ENCODE measurements at regions of chr19 and their contacts with region 1.

Region 1: DNA sequence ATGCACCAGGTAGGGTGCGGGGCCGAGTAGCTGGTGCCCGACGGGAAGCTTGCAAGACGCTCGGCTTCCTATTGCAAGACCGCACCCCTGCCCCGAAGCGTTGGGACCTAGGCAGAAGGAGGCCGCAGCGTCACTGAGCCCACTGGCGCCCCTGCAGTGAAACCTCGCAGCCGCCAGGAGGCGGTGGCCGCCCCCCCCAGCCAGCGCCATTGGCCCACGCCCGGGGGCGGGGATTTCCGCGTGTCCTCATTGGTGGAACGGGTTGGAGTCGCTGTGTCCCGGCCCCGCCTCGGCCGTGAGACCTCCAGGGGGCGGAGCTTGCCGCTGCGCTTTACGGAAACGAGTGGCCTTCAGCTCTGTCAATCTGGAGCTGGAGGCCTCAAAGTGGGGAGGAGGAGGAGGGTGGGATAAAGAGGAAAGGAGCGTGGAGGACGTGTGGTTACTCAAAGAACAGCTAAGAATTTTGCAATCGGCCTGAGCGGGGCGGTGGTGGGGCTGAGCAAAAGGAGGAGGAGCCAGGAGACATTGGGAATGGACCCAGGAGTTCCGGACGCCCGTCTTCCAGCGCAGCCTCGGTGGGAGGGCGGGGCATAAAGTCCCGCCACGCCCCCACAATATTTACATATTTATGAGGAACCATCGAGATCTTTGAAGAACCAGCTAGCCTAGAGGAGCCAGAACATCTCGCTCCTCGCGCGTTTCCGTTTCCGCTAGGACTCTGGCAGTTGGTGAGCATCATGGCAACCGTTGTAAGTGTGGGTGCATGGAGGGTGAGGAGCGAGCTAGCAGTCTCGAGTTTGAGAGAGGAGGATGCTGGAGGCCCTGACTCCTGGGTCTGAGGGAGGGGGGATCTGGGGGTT is at the starts of genes GYS1 and RUVBL2:
- DNase-seq: peak; percentile 96 to 100 (median 99)
- ATAC-seq: peak; percentile 95
- H3K4me3 ChIP-seq: peak within 1 kb of the TSS; percentile 70
- H3K4me3 Mint-ChIP-seq: peak within 1 kb of the TSS; percentile 95 to 100 (median 96)
- H3K27ac ChIP-seq: peak within 1 kb of the TSS; percentile 80
- H3K27ac Mint-ChIP-seq: peak within 1 kb of the TSS; percentile 89 to 99 (median 97)
- H3K4me1 ChIP-seq: peaks cover 23 to 24% of the 10 kb centered on the region in 2 donors
- H3K4me1 Mint-ChIP-seq: peaks cover 40 to 59% (median 46%) of the 10 kb centered on the region in 7 donors
- H3K27me3 ChIP-seq: no peaks in the 10 kb centered on the region
- H3K27me3 Mint-ChIP-seq: no peaks in the 10 kb centered on the region
- total RNA-seq, gene GYS1: 27.3 to 82.3 (median 50.7) TPM
- total RNA-seq, gene RUVBL2: 23.4 to 94.0 (median 24.1) TPM

Region 2: DNA sequence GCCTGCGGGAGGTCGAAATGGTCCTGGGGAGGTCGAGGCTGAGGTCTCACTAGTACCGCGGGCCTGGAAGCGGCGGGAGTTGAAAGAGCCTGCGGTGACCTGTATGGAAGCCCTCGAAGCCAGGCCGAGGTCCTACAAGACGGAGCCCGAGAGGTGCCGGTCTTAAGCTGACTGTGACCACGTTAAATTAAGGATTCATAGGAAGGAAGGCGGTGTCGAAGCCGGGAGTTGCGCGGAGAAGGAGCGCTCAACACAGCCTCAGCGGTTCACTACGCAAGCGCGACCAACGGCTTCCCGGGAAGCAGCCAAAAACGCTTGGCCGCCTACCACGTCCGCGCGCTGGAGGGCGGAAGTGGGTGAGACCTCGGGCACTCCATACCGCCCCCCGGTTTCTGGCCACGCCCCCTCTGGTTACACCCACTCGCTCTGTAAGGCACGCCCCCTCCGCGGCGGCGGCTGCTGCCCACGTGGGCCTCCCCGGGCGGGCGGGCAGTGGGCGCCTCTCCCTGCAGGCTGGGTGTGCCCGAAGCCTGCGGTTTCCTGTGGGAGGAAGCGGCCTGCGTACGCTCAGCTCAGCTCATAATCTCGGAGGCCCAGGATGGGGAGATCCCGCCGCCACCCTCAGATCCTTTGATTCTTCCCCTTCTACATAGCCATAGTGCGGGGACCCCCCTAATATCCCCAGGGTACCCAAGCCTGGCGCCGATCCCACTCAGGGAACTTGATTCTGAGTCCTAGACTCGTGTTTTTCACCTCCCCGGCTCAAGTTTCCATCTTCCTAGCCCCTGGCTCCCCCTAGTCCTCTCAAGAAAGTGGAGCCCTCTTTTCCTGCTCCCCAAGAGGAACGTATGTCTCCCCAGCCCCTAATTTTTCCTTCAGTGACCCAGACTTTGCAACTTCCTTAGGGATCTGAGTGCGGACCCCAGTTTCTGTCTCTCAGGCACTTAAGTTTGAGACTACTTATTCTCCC is 671.5 kb before region 1 on chr19:
- CTCF ChIA-PET with region 1: no interaction called
- POLR2A ChIA-PET with region 1: no interaction called
- intact Hi-C with region 1: loop called in 1 of 2 experiments (anchors 10 kb)
- DNase-seq: peak; percentile 99 to 100 (median 100)
- ATAC-seq: peak; percentile 87
- H3K4me3 ChIP-seq: peak overlapping the region; percentile 79
- H3K4me3 Mint-ChIP-seq: peak overlapping the region; percentile 90 to 99 (median 96)
- H3K27ac ChIP-seq: peak overlapping the region; percentile 100
- H3K27ac Mint-ChIP-seq: peak overlapping the region; percentile 96 to 100 (median 99)
- H3K4me1 ChIP-seq: peaks cover 45 to 47% of the 10 kb centered on the region in 2 donors
- H3K4me1 Mint-ChIP-seq: peaks cover 36 to 63% (median 51%) of the 10 kb centered on the region in 7 donors
- H3K27me3 ChIP-seq: no peaks in the 10 kb centered on the region
- H3K27me3 Mint-ChIP-seq: peaks cover 0 to 2% (median 0%) of the 10 kb centered on the region in 5 donors

Region 3: DNA sequence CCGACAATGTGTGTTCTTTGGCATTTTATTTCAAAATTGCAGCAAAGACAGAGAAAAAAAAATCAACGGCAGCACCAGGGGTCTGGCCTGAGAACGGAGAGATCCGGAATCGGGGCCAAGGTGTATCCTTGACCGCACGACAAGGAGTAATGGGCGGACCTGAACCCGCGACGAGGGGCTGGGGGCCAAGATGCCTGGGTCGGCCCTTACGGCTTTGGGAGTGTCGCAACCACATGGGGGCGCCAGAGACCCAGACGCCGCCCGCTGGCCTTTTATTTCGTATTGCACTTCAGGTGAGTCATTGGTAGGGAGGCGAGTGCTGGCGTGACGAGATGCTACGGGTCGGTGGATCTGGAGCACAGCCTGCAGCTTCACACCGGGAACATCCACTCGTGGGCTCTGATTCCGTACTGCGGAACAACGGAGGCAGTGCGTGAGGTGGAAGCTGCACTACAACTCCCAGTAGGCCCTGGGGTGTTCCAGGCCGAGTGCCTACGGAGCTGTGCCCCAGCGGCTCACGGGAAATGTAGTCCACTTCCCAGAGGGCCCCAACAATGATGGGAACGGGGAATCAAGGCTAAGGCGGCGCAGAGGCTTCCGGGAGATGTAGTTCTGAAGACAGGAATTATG is 198.2 kb before region 1 on chr19:
- CTCF ChIA-PET with region 1: interaction called, 5 read pairs
- POLR2A ChIA-PET with region 1: interaction called, 4 read pairs
- intact Hi-C with region 1: loop called in 1 of 2 experiments (anchors 1 kb)
- DNase-seq: peak; percentile 72 to 87 (median 84)
- ATAC-seq: peak; percentile 99
- H3K4me3 ChIP-seq: peak overlapping the region; percentile 96
- H3K4me3 Mint-ChIP-seq: peak overlapping the region; percentile 74 to 99 (median 94)
- H3K27ac ChIP-seq: peak overlapping the region; percentile 67
- H3K27ac Mint-ChIP-seq: peak overlapping the region; percentile 83 to 95 (median 93)
- H3K4me1 ChIP-seq: peaks cover 4 to 6% of the 10 kb centered on the region in 2 donors
- H3K4me1 Mint-ChIP-seq: peaks cover 5 to 13% (median 7%) of the 10 kb centered on the region in 7 donors
- H3K27me3 ChIP-seq: no peaks in the 10 kb centered on the region
- H3K27me3 Mint-ChIP-seq: no peaks in the 10 kb centered on the region

Region 4: DNA sequence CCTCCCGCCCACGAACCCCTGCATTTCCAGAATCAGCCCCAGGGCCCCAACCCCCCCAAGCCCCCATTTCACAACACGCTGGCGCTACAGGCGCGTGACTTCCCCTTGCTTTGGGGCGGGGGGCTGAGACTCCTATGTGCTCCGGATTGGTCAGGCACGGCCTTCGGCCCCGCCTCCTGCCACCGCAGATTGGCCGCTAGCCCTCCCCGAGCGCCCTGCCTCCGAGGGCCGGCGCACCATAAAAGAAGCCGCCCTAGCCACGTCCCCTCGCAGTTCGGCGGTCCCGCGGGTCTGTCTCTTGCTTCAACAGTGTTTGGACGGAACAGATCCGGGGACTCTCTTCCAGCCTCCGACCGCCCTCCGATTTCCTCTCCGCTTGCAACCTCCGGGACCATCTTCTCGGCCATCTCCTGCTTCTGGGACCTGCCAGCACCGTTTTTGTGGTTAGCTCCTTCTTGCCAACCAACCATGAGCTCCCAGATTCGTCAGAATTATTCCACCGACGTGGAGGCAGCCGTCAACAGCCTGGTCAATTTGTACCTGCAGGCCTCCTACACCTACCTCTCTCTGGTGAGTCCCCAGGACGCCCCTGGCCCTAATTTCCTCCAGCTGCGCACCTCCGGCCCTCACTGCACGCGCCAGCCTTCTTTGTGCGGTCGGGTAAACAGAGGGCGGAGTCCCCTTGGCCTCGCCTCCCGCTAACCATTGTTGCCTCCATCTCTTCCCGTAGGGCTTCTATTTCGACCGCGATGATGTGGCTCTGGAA is 28.2 kb before region 1 on chr19 and contains the start of gene FTL:
- CTCF ChIA-PET with region 1: interaction called, 4 read pairs
- POLR2A ChIA-PET with region 1: interaction called, 58 read pairs
- intact Hi-C with region 1: loop called (anchors 1 kb)
- DNase-seq: peak; percentile 77 to 93 (median 84)
- ATAC-seq: peak; percentile 85
- H3K4me3 ChIP-seq: peak within 1 kb of the TSS; percentile 86
- H3K4me3 Mint-ChIP-seq: peak within 1 kb of the TSS; percentile 94 to 100 (median 99)
- H3K27ac ChIP-seq: peak within 1 kb of the TSS; percentile 73
- H3K27ac Mint-ChIP-seq: peak within 1 kb of the TSS; percentile 93 to 100 (median 97)
- H3K4me1 ChIP-seq: peaks cover 30 to 37% of the 10 kb centered on the region in 2 donors
- H3K4me1 Mint-ChIP-seq: peaks cover 42 to 69% (median 62%) of the 10 kb centered on the region in 7 donors
- H3K27me3 ChIP-seq: no peaks in the 10 kb centered on the region
- H3K27me3 Mint-ChIP-seq: no peaks in the 10 kb centered on the region
- total RNA-seq, gene FTL: 888 to 1,929 (median 1,286) TPM

Region 5: GRCh38 chr19:49118565-49119410 is 125.4 kb after region 1 on chr19 and contains the start of gene C19orf73:
- CTCF ChIA-PET with region 1: no interaction called
- POLR2A ChIA-PET with region 1: interaction called, 3 read pairs
- intact Hi-C with region 1: loop called (anchors 1 kb)
- DNase-seq: peak; percentile 93 to 98 (median 97)
- ATAC-seq: peak; percentile 91
- H3K4me3 ChIP-seq: peak within 1 kb of the TSS; percentile 83
- H3K4me3 Mint-ChIP-seq: peak within 1 kb of the TSS; percentile 83 to 91 (median 88)
- H3K27ac ChIP-seq: peak within 1 kb of the TSS; percentile 92
- H3K27ac Mint-ChIP-seq: peak within 1 kb of the TSS; percentile 89 to 95 (median 93)
- H3K4me1 ChIP-seq: peaks cover 13 to 16% of the 10 kb centered on the region in 2 donors
- H3K4me1 Mint-ChIP-seq: peaks cover 25 to 43% (median 39%) of the 10 kb centered on the region in 7 donors
- H3K27me3 ChIP-seq: no peaks in the 10 kb centered on the region
- H3K27me3 Mint-ChIP-seq: peaks cover 0 to 27% (median 0%) of the 10 kb centered on the region in 5 donors
- total RNA-seq, gene C19orf73: 1.3 to 2.8 (median 2.2) TPM

Region 6: GRCh38 chr19:49451430-49452181 is 458.2 kb after region 1 on chr19 and contains the start of gene PIH1D1:
- CTCF ChIA-PET with region 1: no interaction called
- POLR2A ChIA-PET with region 1: interaction called, 6 read pairs
- intact Hi-C with region 1: loop called (anchors 5 kb)
- DNase-seq: peak; percentile 69 to 97 (median 94)
- ATAC-seq: peak; percentile 71
- H3K4me3 ChIP-seq: peak within 1 kb of the TSS; percentile 85
- H3K4me3 Mint-ChIP-seq: peak within 1 kb of the TSS; percentile 95 to 100 (median 99)
- H3K27ac ChIP-seq: peak within 1 kb of the TSS; percentile 95
- H3K27ac Mint-ChIP-seq: peak within 1 kb of the TSS; percentile 92 to 100 (median 99)
- H3K4me1 ChIP-seq: peaks cover 15 to 26% of the 10 kb centered on the region in 2 donors
- H3K4me1 Mint-ChIP-seq: peaks cover 31 to 68% (median 55%) of the 10 kb centered on the region in 7 donors
- H3K27me3 ChIP-seq: no peaks in the 10 kb centered on the region
- H3K27me3 Mint-ChIP-seq: no peaks in the 10 kb centered on the region
- total RNA-seq, gene PIH1D1: 136 to 183 (median 159) TPM

Region 7: DNA sequence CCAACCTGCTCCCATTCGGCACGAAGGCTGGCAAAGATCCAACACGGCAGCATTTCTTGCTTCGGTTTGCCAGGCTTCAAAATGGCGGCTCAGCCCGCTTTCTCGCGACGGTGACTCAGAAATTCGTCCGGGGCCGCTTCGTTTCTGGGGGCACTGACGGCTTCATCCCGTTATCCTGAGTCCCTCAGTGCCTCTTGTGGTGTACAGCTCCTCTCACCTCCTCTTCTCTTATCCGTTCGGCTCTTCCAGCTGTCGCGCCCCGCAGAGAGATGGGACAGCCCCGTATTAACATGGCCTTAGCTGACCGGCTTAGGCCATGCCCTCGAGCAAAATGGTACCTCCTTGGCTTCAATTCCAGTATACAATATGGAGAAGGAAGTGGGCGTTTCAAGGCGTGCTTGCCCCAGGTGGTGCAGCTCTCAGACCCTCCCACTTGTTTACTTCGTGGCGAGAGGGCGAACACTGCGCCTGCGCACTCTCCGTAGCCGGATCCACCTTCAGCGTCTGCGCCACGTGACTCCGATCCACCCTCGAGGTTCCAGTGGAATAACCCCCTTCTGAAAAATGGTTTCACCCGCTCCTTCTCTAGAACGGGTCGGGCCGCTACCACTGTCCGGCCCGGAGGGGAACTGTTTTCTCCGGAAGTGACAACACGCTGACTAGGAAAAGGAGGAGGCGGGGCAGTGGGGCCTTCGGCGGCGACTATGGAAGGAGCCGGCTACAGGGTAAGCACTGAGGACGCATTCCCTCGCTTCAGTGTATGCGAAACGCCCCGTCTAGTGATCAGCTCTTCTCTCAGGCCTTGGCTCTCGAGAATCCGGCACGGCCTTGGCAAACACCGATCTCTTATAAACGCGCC is 883.8 kb after region 1 on chr19 and contains the starts of genes AKT1S1 and TBC1D17:
- CTCF ChIA-PET with region 1: no interaction called
- POLR2A ChIA-PET with region 1: no interaction called
- intact Hi-C with region 1: loop called (anchors 1 kb)
- DNase-seq: peak; percentile 90 to 100 (median 99)
- ATAC-seq: peak; percentile 81
- H3K4me3 ChIP-seq: peak within 1 kb of the TSS; percentile 96
- H3K4me3 Mint-ChIP-seq: no peak within 1 kb of the TSS
- H3K27ac ChIP-seq: peak within 1 kb of the TSS; percentile 97
- H3K27ac Mint-ChIP-seq: no peak within 1 kb of the TSS
- H3K4me1 ChIP-seq: peaks cover 11 to 20% of the 10 kb centered on the region in 2 donors
- H3K4me1 Mint-ChIP-seq: peaks cover 23 to 35% (median 28%) of the 10 kb centered on the region in 7 donors
- H3K27me3 ChIP-seq: no peaks in the 10 kb centered on the region
- H3K27me3 Mint-ChIP-seq: no peaks in the 10 kb centered on the region
- total RNA-seq, gene AKT1S1: 15.9 to 25.7 (median 21.2) TPM
- total RNA-seq, gene TBC1D17: 42.9 to 106 (median 53.0) TPM

Measured in naive thymus-derived CD4-positive, alpha-beta T cell (primary cell).